ENCODE measurements at regions of chr7 and their contacts with region 1.

Region 1: GRCh38 chr7:12211054-12211710 is at the start of gene TMEM106B:
- DNase-seq: peak; percentile 95 to 98 (median 98)
- H3K4me3 ChIP-seq: peak within 1 kb of the TSS; percentile 70 to 94
- H3K4me3 Mint-ChIP-seq: peak within 1 kb of the TSS; percentile 92 to 100 (median 98)
- H3K27ac ChIP-seq: peak within 1 kb of the TSS; percentile 98
- H3K27ac Mint-ChIP-seq: peak within 1 kb of the TSS; percentile 95 to 100 (median 100)
- H3K4me1 ChIP-seq: peaks cover 46% of the 10 kb centered on the region
- H3K4me1 Mint-ChIP-seq: peaks cover 23 to 40% (median 33%) of the 10 kb centered on the region in 4 donors
- H3K27me3 ChIP-seq: no peaks in the 10 kb centered on the region
- H3K27me3 Mint-ChIP-seq: peaks cover 0 to 2% of the 10 kb centered on the region in 2 donors
- total RNA-seq, gene TMEM106B: 56.9 to 62.2 TPM

Region 2: DNA sequence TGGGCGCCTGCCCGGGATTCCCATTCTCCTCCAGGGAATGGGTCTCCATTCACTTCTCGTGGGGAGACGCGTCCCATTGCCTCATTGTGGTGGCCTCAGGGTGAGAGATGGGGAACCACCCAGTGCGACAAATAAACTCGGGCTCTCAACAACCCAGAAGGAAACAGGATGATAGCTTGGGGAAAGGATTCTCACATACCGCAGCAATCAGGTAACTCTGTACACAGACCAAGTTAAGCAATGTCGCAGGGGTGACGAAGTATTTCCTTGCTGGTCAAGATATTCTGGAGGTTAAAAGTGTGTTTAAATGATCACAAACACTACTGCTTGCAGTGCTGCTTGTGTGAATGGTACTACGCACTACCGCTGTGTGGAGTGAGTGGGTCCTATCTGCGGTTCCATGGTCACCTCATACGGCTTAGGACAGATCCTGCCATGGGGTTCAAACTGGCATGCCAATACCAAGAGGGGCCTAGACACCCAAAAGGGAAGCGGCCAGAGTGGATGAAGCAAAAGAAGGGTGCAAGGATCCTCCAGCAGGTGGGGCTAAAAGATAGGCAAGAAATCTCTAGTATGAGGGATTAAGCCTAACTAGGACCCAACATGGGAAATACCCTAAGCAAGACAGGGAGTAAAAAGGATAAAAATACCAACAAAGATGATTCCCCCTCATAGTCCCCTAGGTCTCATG is 143.9 kb before region 1 on chr7:
- CTCF ChIA-PET with region 1: no interaction called
- POLR2A ChIA-PET with region 1: interaction called, 3 read pairs
- intact Hi-C with region 1: loop called (anchors 1 kb)
- DNase-seq: peak; percentile 58 to 66 (median 63)
- H3K4me3 ChIP-seq: no peak overlapping the region
- H3K4me3 Mint-ChIP-seq: no peak overlapping the region
- H3K27ac ChIP-seq: no peak overlapping the region
- H3K27ac Mint-ChIP-seq: peak overlapping the region in 1 of 7 donors; percentile 2
- H3K4me1 ChIP-seq: no peaks in the 10 kb centered on the region
- H3K4me1 Mint-ChIP-seq: peaks cover 0 to 5% (median 3%) of the 10 kb centered on the region in 4 donors
- H3K27me3 ChIP-seq: no peaks in the 10 kb centered on the region
- H3K27me3 Mint-ChIP-seq: no peaks in the 10 kb centered on the region

Region 3: DNA sequence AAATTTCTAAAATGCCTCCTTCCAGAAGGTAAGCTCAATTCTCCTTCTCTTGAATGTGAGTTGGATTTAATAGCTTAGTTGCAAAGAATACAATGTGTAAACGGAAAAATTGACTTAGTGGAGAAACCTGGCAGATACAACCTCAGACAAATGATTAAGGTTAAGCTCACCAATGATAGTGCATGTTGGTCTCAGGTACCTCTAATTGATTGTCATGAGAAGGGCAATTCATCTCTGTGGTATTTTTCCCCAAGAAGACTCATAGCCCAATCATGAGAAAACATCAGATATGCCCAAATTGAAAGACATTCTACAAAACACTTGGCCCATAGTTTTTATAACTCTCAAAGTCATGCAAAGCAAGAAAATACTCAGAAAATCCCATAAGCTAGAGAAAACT is 36.3 kb before region 1 on chr7:
- CTCF ChIA-PET with region 1: interaction called, 3 read pairs
- POLR2A ChIA-PET with region 1: interaction called, 62 read pairs
- intact Hi-C with region 1: loop called (anchors 2 kb)
- DNase-seq: no peak
- H3K4me3 ChIP-seq: no peak overlapping the region
- H3K4me3 Mint-ChIP-seq: no peak overlapping the region
- H3K27ac ChIP-seq: no peak overlapping the region
- H3K27ac Mint-ChIP-seq: no peak overlapping the region
- H3K4me1 ChIP-seq: peaks cover 12% of the 10 kb centered on the region
- H3K4me1 Mint-ChIP-seq: peaks cover 16 to 23% (median 18%) of the 10 kb centered on the region in 4 donors
- H3K27me3 ChIP-seq: no peaks in the 10 kb centered on the region
- H3K27me3 Mint-ChIP-seq: no peaks in the 10 kb centered on the region

Region 4: DNA sequence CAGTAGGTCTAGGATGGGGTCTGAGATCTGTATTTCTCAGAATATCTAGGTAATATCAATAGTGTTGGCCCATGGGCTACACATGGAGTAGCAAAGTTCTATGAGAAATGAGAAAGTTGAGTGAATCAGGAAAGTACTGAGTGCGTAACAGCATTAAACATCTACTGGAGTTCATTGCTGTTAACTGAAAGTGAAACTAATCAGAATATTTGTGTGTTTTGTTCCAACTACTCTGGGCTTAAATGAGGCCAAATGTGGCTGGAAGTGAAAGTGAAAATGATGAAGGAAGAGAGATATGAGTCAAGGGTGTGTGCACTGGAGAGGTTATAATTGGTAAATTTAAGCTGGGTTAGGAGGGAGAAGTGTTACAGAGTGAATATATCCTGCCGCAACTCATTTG is 46.4 kb after region 1 on chr7:
- CTCF ChIA-PET with region 1: interaction called, 11 read pairs
- POLR2A ChIA-PET with region 1: interaction called, 46 read pairs
- intact Hi-C with region 1: loop called (anchors 1 kb)
- DNase-seq: peak; percentile 70 to 85 (median 78)
- H3K4me3 ChIP-seq: peak overlapping the region; percentile 7 to 50
- H3K4me3 Mint-ChIP-seq: no peak overlapping the region
- H3K27ac ChIP-seq: peak overlapping the region; percentile 62
- H3K27ac Mint-ChIP-seq: no peak overlapping the region
- H3K4me1 ChIP-seq: peaks cover 38% of the 10 kb centered on the region
- H3K4me1 Mint-ChIP-seq: peaks cover 4 to 8% (median 5%) of the 10 kb centered on the region in 4 donors
- H3K27me3 ChIP-seq: no peaks in the 10 kb centered on the region
- H3K27me3 Mint-ChIP-seq: no peaks in the 10 kb centered on the region

Region 5: DNA sequence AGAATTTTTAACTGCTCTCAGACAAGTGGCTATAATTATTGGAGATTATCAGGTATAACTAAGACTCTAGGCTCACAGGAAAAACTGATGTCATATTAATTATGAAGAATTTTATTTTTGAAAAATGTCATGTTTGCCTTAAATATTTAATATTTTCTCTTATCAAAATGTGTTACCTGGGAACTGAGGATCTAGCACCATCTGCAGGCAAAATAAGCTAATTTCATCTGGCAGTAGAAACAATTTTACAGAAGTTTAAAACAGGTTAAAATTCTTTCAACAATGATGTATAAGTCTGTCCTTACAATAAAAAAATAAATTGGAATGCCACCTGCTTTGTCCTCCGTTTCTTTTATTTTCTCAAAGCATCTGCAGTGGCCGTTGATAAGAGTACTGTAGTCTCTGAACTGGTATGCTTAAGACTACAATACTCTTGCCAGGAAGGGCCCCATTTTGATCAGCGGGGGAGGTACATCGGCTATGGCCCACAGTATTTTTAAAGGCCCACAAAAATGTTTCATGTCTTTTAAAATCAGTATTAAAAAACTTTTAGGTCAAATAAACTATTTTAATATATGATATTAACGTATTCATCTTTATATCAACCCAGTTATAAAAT is 111.2 kb after region 1 on chr7:
- CTCF ChIA-PET with region 1: interaction called, 8 read pairs
- POLR2A ChIA-PET with region 1: interaction called, 11 read pairs
- intact Hi-C with region 1: loop called (anchors 1 kb)
- DNase-seq: peak in 4 of 5 donors; percentile 38 to 48 (median 42)
- H3K4me3 ChIP-seq: no peak overlapping the region
- H3K4me3 Mint-ChIP-seq: no peak overlapping the region
- H3K27ac ChIP-seq: no peak overlapping the region
- H3K27ac Mint-ChIP-seq: peak overlapping the region in 1 of 7 donors; percentile 19
- H3K4me1 ChIP-seq: no peaks in the 10 kb centered on the region
- H3K4me1 Mint-ChIP-seq: no peaks in the 10 kb centered on the region
- H3K27me3 ChIP-seq: no peaks in the 10 kb centered on the region
- H3K27me3 Mint-ChIP-seq: no peaks in the 10 kb centered on the region

Region 6: GRCh38 chr7:12729112-12729511 is 517.9 kb after region 1 on chr7:
- CTCF ChIA-PET with region 1: no interaction called
- POLR2A ChIA-PET with region 1: interaction called, 3 read pairs
- intact Hi-C with region 1: loop called (anchors 5 kb)
- DNase-seq: no peak
- H3K4me3 ChIP-seq: no peak overlapping the region
- H3K4me3 Mint-ChIP-seq: no peak overlapping the region
- H3K27ac ChIP-seq: no peak overlapping the region
- H3K27ac Mint-ChIP-seq: no peak overlapping the region
- H3K4me1 ChIP-seq: peaks cover 32% of the 10 kb centered on the region
- H3K4me1 Mint-ChIP-seq: peaks cover 17 to 37% (median 18%) of the 10 kb centered on the region in 4 donors
- H3K27me3 ChIP-seq: no peaks in the 10 kb centered on the region
- H3K27me3 Mint-ChIP-seq: peaks cover 0 to 3% of the 10 kb centered on the region in 2 donors

Region 7: DNA sequence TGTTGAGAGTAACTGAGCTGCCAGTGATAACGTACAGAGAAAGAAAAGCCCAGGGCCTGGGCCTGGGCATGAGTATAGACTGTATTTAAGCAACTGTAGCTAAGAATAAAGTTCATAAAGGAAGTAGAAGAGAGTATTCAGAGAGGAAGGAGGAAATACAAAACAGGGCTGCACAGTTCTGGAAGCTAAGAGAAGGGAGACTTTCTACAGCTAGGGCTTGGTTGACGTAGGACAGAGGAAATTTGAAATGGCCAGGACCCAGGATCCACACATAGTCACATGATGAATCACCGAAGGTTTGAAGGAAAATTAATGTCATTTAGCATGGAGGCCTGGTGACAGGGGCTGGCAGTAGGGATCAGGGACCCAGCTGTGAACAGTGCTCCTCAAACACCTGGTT is 543.0 kb after region 1 on chr7:
- CTCF ChIA-PET with region 1: no interaction called
- POLR2A ChIA-PET with region 1: no interaction called
- intact Hi-C with region 1: no loop called
- DNase-seq: no peak
- H3K4me3 ChIP-seq: no peak overlapping the region
- H3K4me3 Mint-ChIP-seq: no peak overlapping the region
- H3K27ac ChIP-seq: no peak overlapping the region
- H3K27ac Mint-ChIP-seq: no peak overlapping the region
- H3K4me1 ChIP-seq: no peaks in the 10 kb centered on the region
- H3K4me1 Mint-ChIP-seq: peaks cover 0 to 2% (median 0%) of the 10 kb centered on the region in 4 donors
- H3K27me3 ChIP-seq: no peaks in the 10 kb centered on the region
- H3K27me3 Mint-ChIP-seq: no peaks in the 10 kb centered on the region

Measured in CD4-positive, alpha-beta memory T cell (primary cell).